ENCODE measurements at regions of chr5 and their contacts with region 1.

Region 1: GRCh38 chr5:38441453-38442246 is 114.8 kb downstream of the LIFR start:
- DNase-seq: peak; percentile 78 to 87 (median 78)
- ATAC-seq: peak; percentile 99 to 100 (median 100)
- H3K4me3 ChIP-seq: no peak overlapping the region
- H3K27ac ChIP-seq: no peak overlapping the region
- H3K4me1 ChIP-seq: no peaks in the 10 kb centered on the region
- H3K27me3 ChIP-seq: no peaks in the 10 kb centered on the region
- CTCF ChIP-seq: peak; percentile 95 to 99 (median 98)
- POLR2A ChIP-seq: no peak

Region 2: GRCh38 chr5:38396766-38397165 is 44.9 kb before region 1 on chr5:
- intact Hi-C with region 1: no loop called
- DNase-seq: no peak
- ATAC-seq: no peak
- H3K4me3 ChIP-seq: no peak overlapping the region
- H3K27ac ChIP-seq: no peak overlapping the region
- H3K4me1 ChIP-seq: peaks cover 0 to 5% (median 0%) of the 10 kb centered on the region in 4 donors
- H3K27me3 ChIP-seq: no peaks in the 10 kb centered on the region
- CTCF ChIP-seq: no peak
- POLR2A ChIP-seq: no peak

Region 3: DNA sequence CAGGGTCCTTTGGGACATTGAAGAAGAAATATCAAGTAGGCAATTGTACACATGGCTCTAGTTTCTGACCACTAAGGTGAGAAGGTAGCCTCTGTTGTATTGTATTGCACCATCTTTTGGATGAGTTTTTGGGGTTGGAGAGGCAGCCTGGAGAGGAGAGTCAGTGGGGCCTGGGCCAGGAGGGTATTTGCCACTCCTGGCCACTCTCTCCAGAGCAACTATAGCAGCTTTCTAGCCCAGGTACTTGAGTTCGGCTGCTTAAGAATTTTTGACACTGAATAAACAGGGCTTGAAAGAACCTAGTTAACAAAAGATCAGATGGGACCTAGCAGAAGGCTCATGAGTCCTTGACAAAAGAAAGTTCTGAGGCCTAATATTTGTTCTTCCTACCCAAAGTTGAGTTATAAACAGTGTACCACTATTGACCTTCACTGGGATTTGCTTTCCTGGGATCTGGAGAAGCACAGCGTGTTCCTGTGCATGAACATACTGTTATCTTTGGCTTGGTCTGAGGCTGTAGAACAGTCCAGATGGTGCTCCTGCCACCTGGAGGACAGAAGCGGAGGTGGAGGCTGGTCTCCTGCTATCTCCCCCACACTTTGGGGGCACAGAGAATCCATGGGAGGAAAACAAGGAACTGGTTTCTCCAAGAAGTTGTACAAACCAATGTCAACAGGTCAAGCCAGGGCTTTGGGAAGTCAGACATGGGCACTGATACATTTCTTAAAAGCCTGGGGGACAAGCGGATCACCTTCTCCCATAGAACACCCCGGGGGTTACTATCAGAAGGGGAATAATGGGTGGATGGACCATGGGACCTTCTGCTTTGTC is 225.2 kb after region 1 on chr5:
- intact Hi-C with region 1: loop called in 1 of 2 experiments (anchors 10 kb)
- DNase-seq: peak in 2 of 3 donors; percentile 23 to 46
- ATAC-seq: peak; percentile 82 to 93 (median 88)
- H3K4me3 ChIP-seq: no peak overlapping the region
- H3K27ac ChIP-seq: no peak overlapping the region
- H3K4me1 ChIP-seq: no peaks in the 10 kb centered on the region
- H3K27me3 ChIP-seq: no peaks in the 10 kb centered on the region
- CTCF ChIP-seq: peak; percentile 26 to 61 (median 46)
- POLR2A ChIP-seq: no peak

Region 4: GRCh38 chr5:38809388-38810359 is 368.0 kb after region 1 on chr5:
- intact Hi-C with region 1: loop called in 1 of 2 experiments (anchors 10 kb)
- DNase-seq: peak; percentile 65 to 71 (median 68)
- ATAC-seq: peak; percentile 85 to 90 (median 87)
- H3K4me3 ChIP-seq: no peak overlapping the region
- H3K27ac ChIP-seq: peak overlapping the region in 1 of 3 donors; percentile 7
- H3K4me1 ChIP-seq: no peaks in the 10 kb centered on the region
- H3K27me3 ChIP-seq: no peaks in the 10 kb centered on the region
- CTCF ChIP-seq: peak; percentile 66 to 73 (median 70)
- POLR2A ChIP-seq: no peak

Measured in right lobe of liver (tissue), 6 donors.